ENCODE measurements at regions of chr12 and their contacts with region 1.

Region 1: GRCh38 chr12:89825591-89826449 is 117.2 kb upstream of the ATP2B1 start:
- DNase-seq: peak; percentile 4
- ATAC-seq: no peak
- H3K4me3 ChIP-seq: no peak overlapping the region
- H3K27ac ChIP-seq: no peak overlapping the region
- H3K4me1 ChIP-seq: no peaks in the 10 kb centered on the region
- H3K27me3 ChIP-seq: no peaks in the 10 kb centered on the region
- CTCF ChIP-seq: no peak
- POLR2A ChIP-seq: no peak
- RAD21 ChIP-seq: no peak

Region 2: GRCh38 chr12:89932699-89933353 is 107.0 kb after region 1 on chr12:
- CTCF ChIA-PET with region 1: no interaction called
- POLR2A ChIA-PET with region 1: no interaction called
- dilution Hi-C with region 1: no loop called
- in situ Hi-C with region 1: no loop called
- intact Hi-C with region 1: loop called (anchors 5 kb)
- DNase-seq: peak; percentile 47
- ATAC-seq: peak; percentile 21; the same call in 1 of the 2 replicates
- H3K4me3 ChIP-seq: no peak overlapping the region
- H3K27ac ChIP-seq: no peak overlapping the region
- H3K4me1 ChIP-seq: no peaks in the 10 kb centered on the region
- H3K27me3 ChIP-seq: no peaks in the 10 kb centered on the region
- CTCF ChIP-seq: no peak
- POLR2A ChIP-seq: no peak
- RAD21 ChIP-seq: no peak

Region 3: GRCh38 chr12:90216815-90217214 is 391.0 kb after region 1 on chr12:
- CTCF ChIA-PET with region 1: no interaction called
- POLR2A ChIA-PET with region 1: no interaction called
- dilution Hi-C with region 1: no loop called
- in situ Hi-C with region 1: no loop called
- intact Hi-C with region 1: no loop called
- DNase-seq: no peak
- ATAC-seq: no peak
- H3K4me3 ChIP-seq: no peak overlapping the region
- H3K27ac ChIP-seq: no peak overlapping the region
- H3K4me1 ChIP-seq: no peaks in the 10 kb centered on the region
- H3K27me3 ChIP-seq: no peaks in the 10 kb centered on the region
- CTCF ChIP-seq: no peak
- POLR2A ChIP-seq: no peak
- RAD21 ChIP-seq: no peak